PC-9 (cell line): ENCODE measurements at regions of chr2 and their contacts with region 1.

Region 1: GRCh38 chr2:165015052-165015642 is 59.8 kb upstream of the SLC38A11 start:
- DNase-seq: peak in 1 of 2 experiments; percentile 40
- H3K4me3 ChIP-seq: no peak overlapping the region
- H3K27ac ChIP-seq: no peak overlapping the region
- H3K4me1 ChIP-seq: no peaks in the 10 kb centered on the region
- H3K27me3 ChIP-seq: no peaks in the 10 kb centered on the region
- CTCF ChIP-seq: peak; percentile 85

Region 2: DNA sequence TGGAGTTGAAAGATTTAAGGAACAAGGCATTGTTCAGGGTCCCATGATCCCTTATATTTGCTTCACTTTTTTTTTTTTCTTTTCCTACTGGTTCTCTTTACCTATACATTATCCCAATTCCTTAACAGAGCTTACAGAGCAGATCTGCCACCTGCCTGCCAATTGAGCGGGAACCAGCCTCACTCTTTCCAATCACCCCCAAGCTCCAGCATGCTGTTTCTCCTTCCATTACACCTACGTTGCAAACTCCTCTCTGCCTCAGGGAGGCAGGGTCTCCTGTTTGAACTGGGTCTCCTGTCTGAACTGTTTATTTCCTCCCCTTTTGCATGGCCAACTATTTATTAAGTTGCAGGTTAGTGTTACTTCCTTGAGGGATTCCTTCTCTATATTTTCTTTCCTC is 17.4 kb after region 1 on chr2:
- CTCF ChIA-PET with region 1: no interaction called
- POLR2A ChIA-PET with region 1: no interaction called
- intact Hi-C with region 1: no loop called
- DNase-seq: no peak
- H3K4me3 ChIP-seq: no peak overlapping the region
- H3K27ac ChIP-seq: no peak overlapping the region
- H3K4me1 ChIP-seq: no peaks in the 10 kb centered on the region
- H3K27me3 ChIP-seq: no peaks in the 10 kb centered on the region
- CTCF ChIP-seq: no peak

Region 3: GRCh38 chr2:165203689-165204559 is 188.8 kb after region 1 on chr2 and contains the start of gene SCN3A:
- CTCF ChIA-PET with region 1: interaction called, 6 read pairs
- POLR2A ChIA-PET with region 1: no interaction called
- intact Hi-C with region 1: loop called (anchors 1 kb)
- DNase-seq: peak in 1 of 2 experiments; percentile 10
- H3K4me3 ChIP-seq: no peak within 1 kb of the TSS
- H3K27ac ChIP-seq: no peak within 1 kb of the TSS
- H3K4me1 ChIP-seq: no peaks in the 10 kb centered on the region
- H3K27me3 ChIP-seq: no peaks in the 10 kb centered on the region
- CTCF ChIP-seq: peak; percentile 66
- total RNA-seq, gene SCN3A: not detected in 2 replicates

Region 4: DNA sequence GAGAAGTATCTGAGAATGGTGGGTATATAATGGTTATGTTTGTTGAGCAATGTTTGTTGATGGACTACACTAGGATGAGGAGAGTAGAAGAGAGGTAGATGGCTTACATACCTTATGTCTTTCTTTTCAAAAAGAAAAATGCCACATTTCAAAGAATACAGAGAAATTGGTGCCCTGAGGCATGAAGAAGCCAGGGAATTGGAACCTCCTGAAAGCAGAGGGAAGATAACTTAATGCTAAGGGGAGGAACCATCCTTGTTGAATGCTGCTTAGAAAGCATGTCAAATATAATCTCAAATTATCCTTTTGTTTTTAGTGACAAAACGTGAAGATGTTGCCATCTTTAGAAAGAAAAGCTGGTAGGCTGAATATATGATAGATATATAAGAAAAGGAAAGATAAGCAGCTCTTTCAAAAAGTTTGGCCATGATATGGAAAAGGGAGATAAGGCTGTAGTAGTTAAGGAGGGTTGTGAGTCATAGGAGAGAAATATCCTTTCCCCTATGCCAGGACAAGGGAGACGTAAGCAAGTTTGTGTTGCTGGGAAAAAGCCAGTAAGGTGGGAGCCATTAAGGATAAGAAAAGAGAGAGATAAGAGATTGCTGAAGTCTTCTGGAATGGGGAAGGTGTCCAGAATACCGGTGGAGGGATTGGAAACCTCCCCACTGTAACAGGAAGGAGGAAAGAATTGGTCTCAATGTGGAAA is 290.4 kb after region 1 on chr2:
- CTCF ChIA-PET with region 1: no interaction called
- POLR2A ChIA-PET with region 1: no interaction called
- intact Hi-C with region 1: loop called (anchors 10 kb)
- DNase-seq: no peak
- H3K4me3 ChIP-seq: no peak overlapping the region
- H3K27ac ChIP-seq: no peak overlapping the region
- H3K4me1 ChIP-seq: no peaks in the 10 kb centered on the region
- H3K27me3 ChIP-seq: no peaks in the 10 kb centered on the region
- CTCF ChIP-seq: no peak